ENCODE measurements at regions of chr2 and their contacts with region 1.

Region 1: GRCh38 chr2:68062680-68063387 is at the start of gene C1D:
- DNase-seq: peak; percentile 96
- H3K4me3 Mint-ChIP-seq: peak within 1 kb of the TSS; percentile 89
- H3K27ac Mint-ChIP-seq: peak within 1 kb of the TSS; percentile 93
- H3K4me1 Mint-ChIP-seq: peaks cover 33% of the 10 kb centered on the region
- H3K27me3 Mint-ChIP-seq: no peaks in the 10 kb centered on the region
- total RNA-seq, gene C1D: 19.0 to 21.4 TPM

Region 2: GRCh38 chr2:67397143-67397986 is 665.5 kb before region 1 on chr2 and contains the start of gene ETAA1:
- CTCF ChIA-PET with region 1: no interaction called
- intact Hi-C with region 1: loop called (anchors 1 kb)
- DNase-seq: peak; percentile 95
- H3K4me3 Mint-ChIP-seq: peak within 1 kb of the TSS; percentile 97
- H3K27ac Mint-ChIP-seq: peak within 1 kb of the TSS; percentile 98
- H3K4me1 Mint-ChIP-seq: peaks cover 20% of the 10 kb centered on the region
- H3K27me3 Mint-ChIP-seq: no peaks in the 10 kb centered on the region
- total RNA-seq, gene ETAA1: 12.8 to 14.0 TPM

Region 3: GRCh38 chr2:67954093-67954748 is 108.6 kb before region 1 on chr2:
- CTCF ChIA-PET with region 1: no interaction called
- intact Hi-C with region 1: no loop called
- DNase-seq: no peak
- H3K4me3 Mint-ChIP-seq: no peak overlapping the region
- H3K27ac Mint-ChIP-seq: no peak overlapping the region
- H3K4me1 Mint-ChIP-seq: no peaks in the 10 kb centered on the region
- H3K27me3 Mint-ChIP-seq: peaks cover 18% of the 10 kb centered on the region